HEK293T (cell line): ENCODE measurements at regions of chr6 and their contacts with region 1.

Region 1: GRCh38 chr6:131519670-131520436 is 53.2 kb upstream of the ARG1 start:
- DNase-seq: peak; percentile 71

Region 2: GRCh38 chr6:131488780-131489179 is 31.1 kb before region 1 on chr6:
- CTCF ChIA-PET with region 1: no interaction called
- POLR2A ChIA-PET with region 1: no interaction called
- DNase-seq: no peak

Region 3: GRCh38 chr6:131532580-131533039 is 12.8 kb after region 1 on chr6:
- CTCF ChIA-PET with region 1: interaction called, 13 read pairs
- POLR2A ChIA-PET with region 1: no interaction called
- DNase-seq: no peak

Region 4: DNA sequence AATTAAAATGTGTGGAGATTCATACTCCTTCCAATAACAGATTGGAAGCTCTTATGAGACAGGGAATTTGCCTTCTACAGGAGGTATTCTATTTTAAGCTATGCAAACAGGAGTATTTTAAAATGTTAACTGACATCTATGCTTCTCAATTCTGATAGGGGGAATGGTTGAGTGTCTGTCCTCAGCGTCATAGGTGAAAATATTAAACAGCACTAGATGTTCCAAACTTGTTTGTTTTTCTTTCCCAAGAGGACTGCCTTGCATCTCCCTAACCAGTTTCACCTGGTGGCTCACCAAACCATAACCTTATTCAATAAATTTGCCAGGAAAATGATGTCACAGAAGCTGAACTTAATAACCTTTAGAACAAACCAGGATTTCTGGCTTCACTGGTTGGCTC is 28.6 kb after region 1 on chr6:
- CTCF ChIA-PET with region 1: no interaction called
- POLR2A ChIA-PET with region 1: no interaction called
- DNase-seq: no peak

Region 5: GRCh38 chr6:131929264-131929663 is 409.4 kb after region 1 on chr6:
- CTCF ChIA-PET with region 1: no interaction called
- POLR2A ChIA-PET with region 1: no interaction called
- DNase-seq: no peak